ENCODE measurements at regions of chr20 and their contacts with region 1.

Region 1: DNA sequence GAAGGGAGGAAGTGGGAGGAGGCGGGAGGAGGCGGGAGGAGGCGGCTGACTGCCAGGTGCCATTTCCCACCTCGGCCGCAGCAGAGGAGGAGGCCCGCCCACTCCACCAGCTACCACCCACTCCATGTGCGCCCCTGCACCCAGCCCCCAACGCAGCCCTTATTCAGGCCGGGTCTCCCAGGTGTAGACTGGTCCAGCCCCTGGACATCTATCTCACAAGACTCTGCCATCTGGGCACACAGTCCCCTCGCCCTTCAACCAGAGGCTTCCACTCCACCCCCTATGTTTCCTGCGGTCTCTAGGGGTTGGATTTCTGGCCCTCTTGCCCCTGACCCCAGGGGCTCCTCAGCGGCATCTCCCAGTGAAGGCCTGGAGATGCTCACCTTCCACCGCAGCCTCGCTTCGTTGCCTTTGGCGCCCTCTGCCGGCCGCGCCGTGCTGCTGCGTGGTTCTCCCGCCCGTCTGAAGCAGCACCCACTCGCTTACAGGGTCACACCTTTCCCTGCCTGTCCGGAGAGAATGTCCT is 32.6 kb upstream of the FAM83D start:
- DNase-seq: peak; percentile 68
- H3K4me3 ChIP-seq: peak overlapping the region; percentile 7
- H3K27ac ChIP-seq: no peak overlapping the region
- H3K4me1 ChIP-seq: no peaks in the 10 kb centered on the region
- H3K27me3 ChIP-seq: no peaks in the 10 kb centered on the region
- CTCF ChIP-seq: peak; percentile 90

Region 2: GRCh38 chr20:38861071-38861401 is 32.6 kb before region 1 on chr20:
- intact Hi-C with region 1: loop called (anchors 2 kb)
- DNase-seq: no peak
- H3K4me3 ChIP-seq: no peak overlapping the region
- H3K27ac ChIP-seq: no peak overlapping the region
- H3K4me1 ChIP-seq: no peaks in the 10 kb centered on the region
- H3K27me3 ChIP-seq: no peaks in the 10 kb centered on the region
- CTCF ChIP-seq: no peak

Measured in colonic mucosa (tissue), 4 donors.